Right cardiac atrium (tissue), 5 donors: ENCODE measurements at regions of chr6 and their contacts with region 1.

Region 1: GRCh38 chr6:70304616-70305015 is 1.7 kb upstream of the COL9A1 start:
- DNase-seq: no peak
- ATAC-seq: no peak
- H3K4me3 ChIP-seq: no peak overlapping the region
- H3K27ac ChIP-seq: no peak overlapping the region
- H3K4me1 ChIP-seq: no peaks in the 10 kb centered on the region
- H3K27me3 ChIP-seq: no peaks in the 10 kb centered on the region

Region 2: DNA sequence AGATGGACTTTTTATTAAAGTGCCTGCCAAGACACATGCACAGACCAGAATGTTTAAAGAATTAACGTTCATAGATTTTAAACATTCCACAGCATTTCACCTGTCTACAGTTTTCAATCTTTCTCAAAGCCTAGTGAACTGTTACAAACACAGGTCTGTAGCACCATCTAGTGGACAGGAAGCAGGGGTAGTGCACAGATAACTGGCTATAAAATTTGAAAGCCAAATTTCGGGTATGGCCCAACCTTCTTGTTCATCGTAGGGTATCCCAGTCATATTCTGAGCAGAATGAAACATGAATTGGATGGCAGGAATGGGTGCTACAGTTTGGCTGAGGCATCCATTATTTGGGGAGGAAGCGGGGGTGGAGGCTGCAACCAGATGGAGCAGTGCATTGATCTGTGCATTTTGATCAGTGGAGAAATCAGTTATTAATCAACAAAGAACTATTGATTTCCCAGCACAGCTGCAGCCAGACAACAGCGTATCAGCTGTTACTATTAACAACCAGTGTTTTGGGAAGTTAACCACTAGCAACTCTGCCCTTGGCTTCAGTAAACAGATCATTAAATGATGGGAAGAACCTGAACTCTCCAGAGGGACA is 708.4 kb after region 1 on chr6:
- intact Hi-C with region 1: loop called in 1 of 4 experiments (anchors 10 kb)
- DNase-seq: no peak
- ATAC-seq: peak; percentile 56 to 73
- H3K4me3 ChIP-seq: no peak overlapping the region
- H3K27ac ChIP-seq: no peak overlapping the region
- H3K4me1 ChIP-seq: no peaks in the 10 kb centered on the region
- H3K27me3 ChIP-seq: no peaks in the 10 kb centered on the region